ENCODE measurements at regions of chr12 and their contacts with region 1.

Region 1: DNA sequence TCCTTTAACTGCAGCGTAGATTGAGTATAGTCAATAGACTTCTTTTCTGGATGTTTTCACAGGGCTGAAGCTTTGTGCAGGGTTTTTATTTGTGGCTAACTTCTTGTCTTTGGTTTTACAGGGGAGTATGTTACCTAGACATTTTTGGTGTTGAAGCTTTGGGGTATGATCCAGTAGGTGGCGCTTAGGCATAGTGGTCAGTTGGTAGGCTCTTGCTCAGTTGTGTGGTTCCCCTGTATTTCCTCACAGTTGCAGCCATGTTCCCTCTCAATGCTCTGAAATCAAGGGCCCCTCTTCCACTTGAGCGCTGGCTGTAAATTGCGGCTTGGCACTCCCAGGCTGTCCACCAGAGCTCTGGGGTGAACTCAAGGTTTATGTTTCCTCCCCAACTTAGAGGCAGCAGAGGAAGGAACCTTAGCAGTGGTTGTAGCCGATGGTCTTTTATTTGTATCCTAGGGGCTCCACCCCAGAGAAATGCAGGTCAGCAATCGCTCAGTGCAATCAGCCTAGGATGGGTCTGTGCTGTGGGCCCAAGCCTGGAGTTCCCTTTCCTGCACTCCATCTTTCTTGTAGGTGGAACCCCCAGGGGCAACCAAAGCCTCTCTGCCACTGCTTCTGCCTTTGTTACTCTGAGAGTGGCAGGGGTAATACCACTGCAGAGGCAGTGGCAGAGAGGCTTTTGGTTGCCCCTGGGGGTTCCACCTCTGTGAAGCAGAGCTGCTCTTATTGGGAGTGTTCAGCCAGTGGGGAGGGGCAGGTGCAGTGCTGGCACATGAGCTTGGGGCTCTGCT is 55.1 kb downstream of the CMAS start:
- DNase-seq: peak; percentile 67
- H3K4me3 Mint-ChIP-seq: no peak overlapping the region
- H3K27ac Mint-ChIP-seq: peak overlapping the region; percentile 23
- H3K4me1 Mint-ChIP-seq: peaks cover 19% of the 10 kb centered on the region
- H3K27me3 Mint-ChIP-seq: no peaks in the 10 kb centered on the region

Region 2: DNA sequence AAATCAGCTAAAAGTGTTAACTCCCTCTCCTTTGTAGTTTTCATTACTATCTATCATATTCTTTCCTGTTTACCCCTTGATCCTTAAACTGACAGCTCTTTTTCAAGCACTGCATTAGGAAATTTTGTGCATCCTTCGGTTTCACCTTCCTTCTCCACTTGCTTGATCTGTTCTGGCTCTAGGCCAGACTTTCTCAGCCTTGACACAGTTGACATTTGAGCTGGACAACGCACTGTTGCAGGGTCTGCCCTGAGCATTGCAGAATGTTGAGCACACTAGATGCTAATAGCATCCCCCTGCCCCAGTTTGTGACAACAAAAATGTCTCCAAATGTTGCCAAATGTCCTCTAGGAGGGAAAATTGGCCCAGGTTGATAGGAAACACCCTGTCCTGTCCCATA is 251.3 kb before region 1 on chr12:
- CTCF ChIA-PET with region 1: no interaction called
- POLR2A ChIA-PET with region 1: no interaction called
- intact Hi-C with region 1: no loop called
- DNase-seq: no peak
- H3K4me3 Mint-ChIP-seq: no peak overlapping the region
- H3K27ac Mint-ChIP-seq: no peak overlapping the region
- H3K4me1 Mint-ChIP-seq: no peaks in the 10 kb centered on the region
- H3K27me3 Mint-ChIP-seq: peaks cover 6% of the 10 kb centered on the region

Region 3: DNA sequence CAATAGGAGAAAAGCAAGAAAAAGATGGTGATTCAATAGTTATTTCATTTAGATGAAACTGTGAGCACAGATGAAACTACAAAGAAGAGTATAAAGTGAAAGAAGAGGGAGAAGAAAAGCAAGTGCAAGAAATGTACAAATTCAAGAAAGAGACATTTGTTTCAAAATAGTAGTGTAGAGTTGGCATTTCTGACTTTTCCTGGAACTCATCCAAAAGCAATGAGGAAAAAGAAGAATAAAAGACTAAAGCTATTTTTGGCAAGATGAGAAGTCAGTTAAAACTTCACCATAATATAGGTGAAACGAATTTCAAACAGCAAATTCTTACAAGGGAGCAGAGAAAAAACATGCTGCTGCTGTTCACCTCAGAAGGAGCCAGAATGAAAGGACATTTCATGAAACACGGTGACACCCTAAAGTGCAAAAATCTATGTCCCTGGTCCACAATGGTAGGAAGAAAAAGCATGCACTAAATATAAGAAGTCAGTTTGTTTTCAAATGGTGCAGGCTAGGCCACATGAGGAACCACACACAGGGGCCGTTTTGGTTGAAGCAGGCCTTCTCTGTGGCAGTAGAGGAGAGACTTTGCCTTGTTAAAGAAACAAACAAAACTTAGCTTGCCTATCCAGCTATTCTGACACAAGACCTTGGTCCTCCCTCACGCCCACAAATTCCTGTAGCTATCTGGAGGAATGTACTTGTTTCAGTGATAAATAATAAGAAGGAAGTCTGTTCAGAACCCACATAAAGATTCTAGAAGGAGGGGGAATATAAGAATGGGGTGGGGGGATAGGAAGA is 66.2 kb before region 1 on chr12:
- CTCF ChIA-PET with region 1: no interaction called
- POLR2A ChIA-PET with region 1: no interaction called
- intact Hi-C with region 1: no loop called
- DNase-seq: no peak
- H3K4me3 Mint-ChIP-seq: no peak overlapping the region
- H3K27ac Mint-ChIP-seq: no peak overlapping the region
- H3K4me1 Mint-ChIP-seq: peaks cover 6% of the 10 kb centered on the region
- H3K27me3 Mint-ChIP-seq: no peaks in the 10 kb centered on the region

Region 4: DNA sequence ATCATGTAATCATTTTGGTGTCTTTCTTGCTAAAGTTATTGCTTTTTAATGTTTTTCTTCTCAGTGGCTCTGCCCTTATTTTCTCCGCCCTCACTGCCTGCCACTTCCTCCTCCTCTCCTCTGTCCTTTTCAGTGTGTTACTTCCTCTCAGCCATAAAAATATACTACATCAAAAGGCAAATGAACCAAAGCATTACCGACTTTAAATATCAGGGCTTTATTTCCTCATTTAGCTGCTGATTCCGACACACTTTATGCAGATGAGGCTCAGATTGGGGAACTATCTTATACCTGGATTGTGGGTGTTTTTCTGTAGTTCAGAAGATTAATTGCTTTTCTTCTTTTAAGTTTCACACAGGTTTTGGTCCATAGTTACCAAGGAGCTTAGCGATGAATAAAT is 63.0 kb after region 1 on chr12:
- CTCF ChIA-PET with region 1: no interaction called
- POLR2A ChIA-PET with region 1: no interaction called
- intact Hi-C with region 1: loop called (anchors 2 kb)
- DNase-seq: peak; percentile 18
- H3K4me3 Mint-ChIP-seq: peak overlapping the region; percentile 9
- H3K27ac Mint-ChIP-seq: peak overlapping the region; percentile 65
- H3K4me1 Mint-ChIP-seq: peaks cover 40% of the 10 kb centered on the region
- H3K27me3 Mint-ChIP-seq: no peaks in the 10 kb centered on the region

Region 5: DNA sequence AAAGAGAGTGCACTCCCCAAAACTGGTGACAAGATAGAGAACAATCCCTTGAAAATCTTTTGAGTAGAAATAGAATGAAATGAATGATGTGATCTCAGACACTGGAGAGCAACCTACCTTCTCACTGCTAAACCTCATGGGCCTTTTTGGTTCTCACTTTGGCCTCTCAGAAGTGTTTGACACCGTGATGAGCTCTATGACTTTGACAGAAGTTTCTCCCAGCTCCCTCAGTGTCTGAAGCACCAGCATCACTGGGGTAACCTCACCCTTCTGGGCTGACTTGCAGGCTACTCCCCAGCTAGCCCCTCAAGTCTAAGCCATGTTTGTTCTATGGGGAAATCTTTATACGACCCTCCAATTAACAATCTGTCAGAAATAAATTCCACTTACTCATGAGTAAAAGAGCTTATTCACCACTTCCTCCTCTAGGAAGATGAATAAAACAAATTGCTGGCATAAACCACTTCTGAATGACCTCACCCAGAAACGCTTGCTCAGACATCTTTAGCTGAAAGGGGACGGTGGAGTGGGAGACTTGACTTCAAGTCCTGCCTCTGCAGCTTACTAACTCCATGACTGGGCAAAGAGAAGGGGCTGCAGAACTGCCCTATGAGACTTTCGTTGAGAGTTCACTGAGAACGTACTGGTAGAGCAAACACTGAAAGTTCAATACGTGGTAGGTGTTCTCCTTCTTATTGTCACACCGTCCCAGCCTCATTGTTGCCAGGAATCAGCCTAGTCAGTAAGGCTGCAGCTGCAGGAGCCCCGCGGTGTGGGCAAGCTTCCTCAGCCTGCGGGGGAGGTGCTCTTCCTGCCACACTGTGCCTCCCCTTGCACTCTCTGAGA is 186.8 kb after region 1 on chr12:
- CTCF ChIA-PET with region 1: interaction called, 6 read pairs
- POLR2A ChIA-PET with region 1: no interaction called
- intact Hi-C with region 1: loop called (anchors 5 kb)
- DNase-seq: peak; percentile 73
- H3K4me3 Mint-ChIP-seq: peak overlapping the region; percentile 77
- H3K27ac Mint-ChIP-seq: peak overlapping the region; percentile 95
- H3K4me1 Mint-ChIP-seq: peaks cover 59% of the 10 kb centered on the region
- H3K27me3 Mint-ChIP-seq: no peaks in the 10 kb centered on the region

Region 6: DNA sequence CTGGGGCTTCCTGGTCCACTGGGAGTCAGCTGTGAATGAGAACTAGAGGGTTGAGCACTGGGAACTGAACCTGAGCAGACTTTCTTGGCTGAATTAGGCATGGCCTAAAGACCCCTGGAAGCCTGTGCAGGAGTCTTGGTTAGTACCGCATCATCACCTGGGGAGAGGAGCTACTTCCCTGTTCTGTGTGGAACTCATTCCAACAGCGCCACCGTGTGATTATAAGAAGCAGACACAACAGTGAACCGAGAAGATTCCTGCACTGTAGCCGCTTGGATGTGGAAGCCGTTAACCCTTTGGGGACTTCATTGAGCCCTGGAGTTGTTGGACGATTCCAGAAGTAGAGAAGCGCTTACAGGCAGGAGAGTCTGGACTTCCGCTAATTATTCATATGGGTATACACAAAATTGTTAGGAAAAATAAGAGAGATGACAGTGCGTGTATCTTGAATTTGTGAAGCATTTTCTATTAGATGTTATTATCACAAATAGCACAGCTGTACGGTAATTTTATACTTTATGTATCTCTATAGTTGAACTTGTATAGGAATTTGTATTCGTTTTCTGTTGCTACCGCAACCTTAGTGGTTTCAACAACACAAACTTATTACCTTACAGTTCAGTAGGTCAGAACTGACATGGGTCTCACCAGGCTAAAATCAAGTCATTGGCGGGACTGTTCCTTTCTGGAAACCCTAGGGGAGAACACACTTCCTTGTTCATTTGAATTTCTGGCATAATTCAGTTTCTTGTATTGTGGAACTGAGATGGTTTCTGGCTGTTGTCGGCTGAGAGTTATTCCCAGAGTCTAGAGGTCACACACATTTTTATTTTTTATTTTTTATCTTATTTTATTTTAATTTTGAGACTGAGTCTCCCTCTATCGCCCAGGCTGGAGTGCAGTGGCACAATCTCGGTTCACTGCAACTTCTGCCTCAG is 342.5 kb after region 1 on chr12:
- CTCF ChIA-PET with region 1: interaction called, 30 read pairs
- POLR2A ChIA-PET with region 1: no interaction called
- intact Hi-C with region 1: loop called (anchors 1 kb)
- DNase-seq: peak; percentile 67
- H3K4me3 Mint-ChIP-seq: no peak overlapping the region
- H3K27ac Mint-ChIP-seq: no peak overlapping the region
- H3K4me1 Mint-ChIP-seq: peaks cover 4% of the 10 kb centered on the region
- H3K27me3 Mint-ChIP-seq: no peaks in the 10 kb centered on the region

Measured in activated CD4-positive, alpha-beta memory T cell treated with anti-CD3 and anti-CD28 coated beads for 36 hours (primary cell).